ENCODE measurements at regions of chr2 and their contacts with region 1.

Region 1: GRCh38 chr2:23912054-23912453 is 14.9 kb downstream of the ATAD2B start:
- DNase-seq: no peak
- ATAC-seq: no peak
- H3K4me3 Mint-ChIP-seq: no peak overlapping the region
- H3K27ac Mint-ChIP-seq: no peak overlapping the region
- H3K4me1 Mint-ChIP-seq: peaks cover 28% of the 10 kb centered on the region
- H3K27me3 Mint-ChIP-seq: no peaks in the 10 kb centered on the region
- CTCF ChIP-seq: no peak

Region 2: DNA sequence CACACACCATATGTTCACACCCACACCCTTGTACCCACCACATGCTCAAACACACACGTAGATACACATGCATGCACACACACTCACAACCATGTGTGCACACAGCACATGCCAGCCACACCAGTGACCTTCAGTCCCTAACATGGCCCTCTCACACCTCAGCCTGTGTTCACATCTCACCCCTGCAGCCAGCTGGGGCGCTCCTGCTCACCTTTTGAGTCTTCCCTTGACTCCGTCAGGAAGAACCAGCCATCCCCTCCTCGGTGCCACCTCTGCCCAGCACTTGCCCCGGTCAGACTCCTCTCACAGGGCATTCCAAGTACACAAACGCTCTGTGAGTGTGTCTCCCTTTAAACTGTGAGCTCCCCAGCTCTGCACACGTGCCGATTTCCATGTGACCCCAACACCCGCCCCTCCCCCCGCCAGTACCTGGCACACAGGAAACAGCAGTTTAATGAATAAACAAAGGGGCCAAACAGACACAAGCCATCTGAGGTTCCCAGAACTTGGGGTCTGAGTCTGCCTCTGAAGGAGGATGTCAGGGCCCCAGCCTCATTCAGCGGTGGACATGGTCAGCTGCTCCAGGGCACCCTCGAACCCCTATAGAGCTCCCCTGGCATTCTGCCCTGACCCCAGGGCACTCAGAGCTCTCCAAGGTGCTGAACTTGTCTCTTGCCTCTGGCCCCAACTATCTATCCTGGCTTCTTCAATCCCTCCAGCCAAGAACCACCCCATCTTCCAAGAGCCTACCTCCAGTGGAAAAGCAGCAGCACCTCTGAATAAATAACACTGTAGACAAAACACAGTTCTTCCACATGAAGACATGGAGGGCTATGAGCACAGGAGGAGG is 238.0 kb before region 1 on chr2:
- CTCF ChIA-PET with region 1: no interaction called
- POLR2A ChIA-PET with region 1: interaction called, 16 read pairs
- intact Hi-C with region 1: no loop called
- DNase-seq: no peak
- ATAC-seq: no peak
- H3K4me3 Mint-ChIP-seq: no peak overlapping the region
- H3K27ac Mint-ChIP-seq: no peak overlapping the region
- H3K4me1 Mint-ChIP-seq: no peaks in the 10 kb centered on the region
- H3K27me3 Mint-ChIP-seq: no peaks in the 10 kb centered on the region
- CTCF ChIP-seq: no peak

Region 3: DNA sequence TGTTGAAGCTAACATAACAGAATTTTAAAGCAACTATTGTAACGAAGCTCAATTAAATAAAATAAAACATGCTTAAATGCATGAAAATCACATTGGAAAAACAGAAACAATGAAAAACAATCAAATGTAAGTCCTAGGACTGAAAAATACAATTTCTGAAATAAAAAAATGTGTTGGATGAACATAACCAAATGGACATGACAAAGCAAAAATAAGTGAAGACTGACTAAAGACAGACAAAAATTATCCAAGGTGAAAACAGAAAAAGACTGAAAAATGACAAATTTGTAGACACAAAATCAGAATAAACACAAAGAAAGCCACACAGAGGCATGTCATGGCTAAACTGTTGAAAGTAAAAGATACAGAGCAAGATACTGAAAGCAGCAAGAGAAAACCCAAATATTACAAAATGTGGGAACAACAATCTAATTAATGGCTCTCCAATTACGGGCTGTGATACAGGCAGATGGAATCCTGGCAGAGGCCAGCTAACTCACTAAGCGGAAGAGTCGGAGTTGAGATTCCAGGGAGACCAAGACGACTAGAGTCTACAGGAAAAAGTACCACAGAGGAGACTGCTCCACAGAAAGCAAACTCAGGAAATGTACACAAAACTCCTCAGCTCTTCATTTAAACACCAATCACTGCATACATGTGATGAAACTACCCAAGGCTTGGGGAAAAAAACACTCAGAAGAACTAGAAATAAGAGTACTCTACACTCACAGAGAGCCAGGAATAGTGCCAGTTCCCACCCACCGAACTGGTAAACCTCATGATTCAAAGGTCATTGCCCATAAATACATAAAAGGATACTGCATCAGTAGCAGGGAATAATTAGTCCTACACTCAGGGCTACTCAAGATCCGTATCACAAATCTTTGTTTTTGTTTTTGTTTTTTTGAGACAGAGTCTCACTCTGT is 68.7 kb before region 1 on chr2:
- CTCF ChIA-PET with region 1: no interaction called
- POLR2A ChIA-PET with region 1: no interaction called
- intact Hi-C with region 1: no loop called
- DNase-seq: no peak
- ATAC-seq: no peak
- H3K4me3 Mint-ChIP-seq: no peak overlapping the region
- H3K27ac Mint-ChIP-seq: no peak overlapping the region
- H3K4me1 Mint-ChIP-seq: no peaks in the 10 kb centered on the region
- H3K27me3 Mint-ChIP-seq: no peaks in the 10 kb centered on the region
- CTCF ChIP-seq: no peak

Region 4: DNA sequence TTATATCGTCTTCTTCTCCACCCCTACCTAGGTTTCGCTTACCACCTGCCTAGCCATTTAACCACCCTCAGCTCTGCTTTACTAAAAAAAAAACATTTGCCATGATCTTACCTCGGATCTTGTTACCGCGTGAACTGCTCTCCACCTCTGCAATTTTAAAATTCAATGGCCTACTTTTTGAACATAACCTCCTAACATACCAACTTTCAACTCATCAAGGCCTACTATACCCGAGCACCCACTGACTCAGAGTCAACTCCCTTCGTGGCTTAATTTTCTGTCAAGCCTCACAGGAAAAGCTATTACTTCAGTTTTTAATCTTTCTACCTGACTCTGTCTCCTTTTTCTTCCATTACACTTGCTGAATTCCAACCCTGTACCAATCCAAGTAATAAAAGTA is 40.8 kb before region 1 on chr2:
- CTCF ChIA-PET with region 1: no interaction called
- POLR2A ChIA-PET with region 1: no interaction called
- intact Hi-C with region 1: no loop called
- DNase-seq: no peak
- ATAC-seq: no peak
- H3K4me3 Mint-ChIP-seq: no peak overlapping the region
- H3K27ac Mint-ChIP-seq: no peak overlapping the region
- H3K4me1 Mint-ChIP-seq: no peaks in the 10 kb centered on the region
- H3K27me3 Mint-ChIP-seq: no peaks in the 10 kb centered on the region
- CTCF ChIP-seq: no peak

Measured in activated B cell treated with CpG ODN at 0.5 μM for 24 hours (primary cell).